ENCODE measurements at regions of chr4 and their contacts with region 1.

Region 1: GRCh38 chr4:99949034-99949998 is 759 bp downstream of the H2AZ1 start:
- DNase-seq: peak; percentile 95

Region 2: GRCh38 chr4:99088481-99089365 is 860.6 kb before region 1 on chr4 and contains the start of gene ADH5:
- intact Hi-C with region 1: loop called in 1 of 2 experiments (anchors 10 kb)
- DNase-seq: peak; percentile 96
- total RNA-seq, gene ADH5: 226 to 243 TPM

Region 3: DNA sequence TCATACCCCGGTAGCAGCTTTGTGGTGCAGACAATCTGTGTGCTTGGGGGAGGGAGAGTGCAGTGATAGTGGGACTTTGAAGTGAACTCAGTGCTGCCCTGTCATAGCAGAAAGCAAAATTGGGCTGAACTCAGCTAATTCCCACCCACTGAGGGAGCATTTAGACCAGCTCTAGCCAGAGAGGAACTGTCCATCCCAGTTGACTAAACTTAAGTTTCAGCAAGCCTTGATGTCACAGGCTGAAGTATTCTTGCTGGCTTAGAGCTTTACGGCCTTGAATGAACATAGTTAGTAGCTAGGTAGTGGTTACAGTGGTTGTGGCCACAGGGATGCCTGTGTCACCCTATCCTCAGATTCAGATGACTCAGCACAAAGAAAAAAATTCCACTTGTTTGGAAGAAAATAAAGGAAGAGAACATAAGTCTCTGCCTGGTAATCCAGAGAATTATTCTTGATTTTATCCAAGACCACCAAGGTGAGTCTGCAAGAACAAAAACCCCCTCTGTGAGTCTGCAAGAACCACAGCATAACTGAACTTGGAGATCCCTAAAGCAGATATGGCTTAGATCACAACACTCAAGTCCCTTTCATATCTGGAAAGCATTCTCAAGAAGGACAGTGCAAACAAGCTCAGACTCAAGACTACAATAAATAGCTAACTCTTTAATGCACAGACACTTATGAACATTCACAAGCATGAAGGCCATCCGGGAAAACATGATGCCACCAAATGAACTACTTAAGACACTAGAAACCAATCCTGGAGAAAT is 553.5 kb before region 1 on chr4:
- intact Hi-C with region 1: no loop called
- DNase-seq: no peak

Region 4: GRCh38 chr4:99894161-99894997 is 54.9 kb before region 1 on chr4 and contains the start of gene LAMTOR3:
- intact Hi-C with region 1: loop called in 1 of 2 experiments (anchors 10 kb)
- DNase-seq: peak; percentile 97
- total RNA-seq, gene LAMTOR3: 26.1 to 30.6 TPM

Region 5: GRCh38 chr4:99927566-99927965 is 21.8 kb before region 1 on chr4:
- intact Hi-C with region 1: no loop called
- DNase-seq: no peak